Dendritic cell treated with granulocyte-macrophage colony-stimulating factor and Interleukin-4, amounts not matched to agents 40 ng/mL and 50 ng/mL, for 4 days (primary cell): ENCODE measurements at regions of chr6 and their contacts with region 1.

Region 1: DNA sequence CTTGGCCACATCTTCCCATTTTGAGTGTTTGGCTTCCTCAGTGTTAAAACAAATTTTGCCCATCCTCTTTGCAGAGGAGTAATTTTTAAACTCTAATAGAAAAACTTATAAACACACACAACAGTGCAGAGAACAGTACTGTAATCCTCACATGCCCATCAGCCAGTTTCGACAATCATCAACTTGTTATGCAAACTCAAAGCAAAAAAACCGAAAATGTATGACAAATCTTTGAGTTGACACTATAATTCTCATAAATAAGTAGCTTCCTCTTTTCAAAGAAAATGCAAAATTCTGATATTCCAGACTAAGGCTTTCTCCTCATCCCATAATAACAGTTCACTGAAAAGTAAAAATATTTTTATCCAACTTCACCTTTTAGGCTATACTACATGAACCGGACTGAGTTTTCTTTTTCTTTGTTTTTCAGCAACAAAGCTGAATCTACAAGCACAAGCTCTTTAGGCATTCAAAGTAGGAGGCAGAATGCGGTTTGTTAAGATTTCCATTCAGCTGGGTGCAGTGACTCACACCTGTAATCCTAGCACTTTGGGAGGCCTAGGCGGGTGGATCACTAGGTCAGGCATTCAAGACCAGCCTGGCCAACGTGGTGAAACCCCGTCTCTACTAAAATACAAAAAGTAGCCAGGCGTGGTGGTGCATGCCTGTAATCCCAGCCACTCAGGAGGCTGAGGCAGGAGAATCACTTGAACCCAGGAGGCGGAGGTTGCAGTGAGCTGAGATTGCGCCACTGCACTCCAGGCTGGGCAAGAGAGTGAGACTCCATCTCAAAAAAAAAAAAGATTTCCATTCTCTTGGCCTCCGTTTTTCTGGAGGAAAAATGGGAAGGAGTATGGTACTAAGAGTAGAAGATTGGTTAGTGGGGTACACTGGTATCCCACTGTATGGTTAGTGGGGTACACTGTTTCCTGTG is 74.8 kb downstream of the GCNT2 start:
- H3K4me3 Mint-ChIP-seq: peak overlapping the region; percentile 23
- H3K27ac Mint-ChIP-seq: peak overlapping the region; percentile 83
- H3K4me1 Mint-ChIP-seq: peaks cover 62% of the 10 kb centered on the region
- H3K27me3 Mint-ChIP-seq: no peaks in the 10 kb centered on the region

Region 2: GRCh38 chr6:10521104-10521808 is 74.7 kb before region 1 on chr6 and contains the start of gene GCNT2:
- intact Hi-C with region 1: loop called (anchors 5 kb)
- H3K4me3 Mint-ChIP-seq: peak within 1 kb of the TSS; percentile 64
- H3K27ac Mint-ChIP-seq: peak within 1 kb of the TSS; percentile 70
- H3K4me1 Mint-ChIP-seq: peaks cover 59% of the 10 kb centered on the region
- H3K27me3 Mint-ChIP-seq: no peaks in the 10 kb centered on the region

Region 3: DNA sequence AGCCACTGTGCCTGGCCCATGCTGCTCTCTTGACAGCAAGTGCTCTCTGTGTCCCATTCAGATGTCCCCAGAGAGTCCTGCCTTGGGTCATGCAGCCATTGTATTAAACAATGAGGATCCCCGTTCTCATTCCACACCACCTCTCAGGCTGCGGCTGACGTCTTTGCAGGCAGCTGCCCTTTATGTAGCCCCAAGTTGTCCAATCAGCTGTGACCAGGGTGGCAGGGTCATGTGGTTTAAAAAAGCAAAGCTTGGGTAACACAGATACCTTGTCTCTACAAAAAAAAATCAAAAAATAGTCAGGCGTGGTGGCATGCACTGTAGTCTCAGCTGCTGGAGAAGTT is 61.6 kb before region 1 on chr6:
- intact Hi-C with region 1: no loop called
- H3K4me3 Mint-ChIP-seq: peak overlapping the region; percentile 27
- H3K27ac Mint-ChIP-seq: peak overlapping the region; percentile 86
- H3K4me1 Mint-ChIP-seq: peaks cover 78% of the 10 kb centered on the region
- H3K27me3 Mint-ChIP-seq: no peaks in the 10 kb centered on the region